ENCODE measurements at regions of chr18 and their contacts with region 1.

Region 1: DNA sequence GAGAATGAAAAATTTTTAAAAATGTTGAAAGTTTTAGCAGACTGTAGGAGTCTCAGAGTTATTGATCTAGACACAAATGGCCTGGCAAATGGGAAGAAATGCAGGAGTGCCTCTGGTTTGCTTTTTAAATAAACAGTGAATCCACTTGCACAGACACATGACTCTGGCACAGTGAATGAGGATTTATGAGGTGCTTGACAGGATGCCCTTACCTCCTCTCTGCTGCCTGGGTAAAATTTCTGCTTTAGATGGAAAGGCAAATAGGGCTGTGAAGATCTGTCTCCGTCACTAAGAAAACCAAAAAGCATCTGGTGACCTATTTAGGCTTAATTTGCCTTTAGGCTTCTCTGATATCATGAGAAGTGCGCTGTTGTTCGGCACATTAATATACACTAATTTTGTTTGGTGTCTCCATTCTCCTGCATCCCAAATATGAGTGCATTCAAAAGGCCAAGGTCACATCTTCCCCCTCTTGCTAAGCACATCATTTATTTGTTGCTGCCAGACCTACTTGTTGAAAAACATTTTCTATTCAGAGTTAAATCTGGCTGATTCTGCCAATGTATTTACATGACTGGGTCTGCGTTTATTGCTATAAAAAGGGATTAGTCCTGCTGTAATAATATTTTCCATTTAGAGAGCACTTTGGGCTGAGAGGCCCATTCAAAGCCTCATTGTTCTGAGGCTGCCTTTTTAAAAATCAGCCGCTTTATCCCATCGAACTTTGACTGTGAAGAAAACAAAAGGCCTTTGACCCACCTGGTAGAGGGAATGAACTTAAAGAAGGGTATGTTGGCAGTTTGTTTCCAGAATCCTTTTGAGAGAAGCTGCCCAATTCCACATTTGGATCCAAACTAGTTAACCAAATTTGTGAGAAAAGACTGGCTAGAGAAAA is 94.9 kb downstream of the RNF152 start:
- DNase-seq: no peak
- H3K4me3 ChIP-seq: no peak overlapping the region
- CTCF ChIP-seq: no peak

Region 2: DNA sequence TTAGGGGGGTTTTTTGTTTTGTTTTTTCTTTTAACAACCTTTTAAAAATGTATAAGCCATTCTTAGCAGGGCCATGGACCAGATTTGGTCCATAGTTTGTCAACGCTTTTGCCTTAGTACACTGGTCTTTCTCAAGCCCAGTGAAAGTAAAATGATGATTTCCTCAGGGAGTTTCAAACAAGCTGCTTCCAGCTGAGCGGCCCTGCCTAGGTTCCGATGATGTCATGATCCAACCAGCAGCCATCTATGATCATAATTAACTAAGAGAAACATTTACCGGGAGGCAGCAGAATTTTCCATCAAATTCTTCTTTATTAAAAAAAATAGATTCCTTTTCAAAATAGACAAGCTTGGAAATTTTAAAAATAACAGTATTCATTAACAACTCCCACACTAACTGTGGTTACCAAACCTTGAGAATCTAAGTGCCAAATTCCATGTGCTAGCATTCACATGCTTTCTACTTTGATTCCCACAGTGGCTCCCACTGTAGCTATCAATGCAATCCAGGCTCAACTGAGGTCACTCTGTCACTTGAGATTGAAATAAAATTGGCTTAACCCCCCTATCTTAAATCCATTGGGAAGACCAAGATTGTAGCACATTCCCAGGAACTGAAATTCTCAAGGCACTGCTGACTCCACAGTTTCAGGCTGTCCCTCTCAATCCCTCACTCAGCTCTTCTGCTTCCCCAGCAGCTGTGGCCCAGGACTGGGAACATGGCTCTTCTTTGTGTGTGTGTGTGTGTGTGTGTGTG is 54.0 kb before region 1 on chr18:
- in situ Hi-C with region 1: no loop called
- DNase-seq: no peak
- H3K4me3 ChIP-seq: no peak overlapping the region
- CTCF ChIP-seq: no peak

Region 3: DNA sequence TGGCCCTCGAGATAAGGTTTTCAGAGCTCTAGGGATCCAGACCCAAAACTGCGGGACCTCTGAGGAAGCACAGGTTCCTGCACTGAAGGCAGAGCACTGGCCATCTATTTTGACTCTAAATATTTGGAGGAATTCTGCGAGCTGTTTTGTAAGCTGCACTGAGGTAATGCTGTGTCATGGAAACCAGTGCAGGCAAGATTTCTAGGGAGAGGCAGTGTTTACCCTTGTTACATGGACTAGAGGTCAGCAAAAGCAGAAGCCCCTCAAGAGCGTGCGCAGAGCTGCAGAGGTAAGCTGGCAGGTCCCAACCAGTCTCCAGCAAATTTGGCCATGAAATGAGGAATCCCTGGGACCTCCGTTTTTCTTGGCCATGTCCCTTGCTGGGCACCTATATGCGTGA is 42.4 kb before region 1 on chr18:
- in situ Hi-C with region 1: loop called (anchors 5 kb)
- DNase-seq: no peak
- H3K4me3 ChIP-seq: no peak overlapping the region
- CTCF ChIP-seq: no peak

Measured in astrocyte of the cerebellum (primary cell).